ENCODE measurements at regions of chr10 and their contacts with region 1.

Region 1: DNA sequence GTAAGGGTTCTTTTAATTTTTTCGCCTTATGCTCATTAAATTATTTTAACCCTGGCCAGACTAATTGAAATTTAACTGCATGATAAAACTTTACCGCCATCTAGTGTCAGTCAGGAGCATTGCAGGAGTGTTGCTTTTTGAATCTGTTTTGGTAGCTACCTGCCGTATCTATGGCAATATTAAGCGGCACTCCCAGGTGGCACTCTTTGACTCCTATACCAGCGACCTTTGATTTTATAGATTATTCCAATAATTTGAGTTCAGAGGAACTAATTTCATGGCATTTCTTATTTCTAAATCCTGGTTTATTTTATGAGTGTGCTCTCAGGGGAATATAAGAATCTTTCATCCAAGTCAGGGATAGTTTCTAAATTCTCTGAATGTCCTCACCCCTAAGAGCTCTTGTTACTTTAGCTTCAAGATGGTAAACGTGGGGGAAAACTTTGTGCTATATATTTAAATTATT is 198.9 kb downstream of the REEP3 start:
- DNase-seq: peak; percentile 64 to 69 (median 67)
- H3K4me3 ChIP-seq: no peak overlapping the region
- H3K4me3 Mint-ChIP-seq: no peak overlapping the region
- H3K27ac ChIP-seq: no peak overlapping the region
- H3K27ac Mint-ChIP-seq: peak overlapping the region in 4 of 7 donors; percentile 40 to 76 (median 60)
- H3K4me1 ChIP-seq: peaks cover 6% of the 10 kb centered on the region
- H3K4me1 Mint-ChIP-seq: peaks cover 4 to 8% (median 6%) of the 10 kb centered on the region in 4 donors
- H3K27me3 ChIP-seq: no peaks in the 10 kb centered on the region
- H3K27me3 Mint-ChIP-seq: peaks cover 0 to 2% of the 10 kb centered on the region in 2 donors

Region 2: GRCh38 chr10:62594093-62594520 is 1126.0 kb before region 1 on chr10:
- CTCF ChIA-PET with region 1: interaction called, 3 read pairs
- POLR2A ChIA-PET with region 1: no interaction called
- intact Hi-C with region 1: loop called (anchors 5 kb)
- DNase-seq: peak; percentile 38 to 59 (median 44)
- H3K4me3 ChIP-seq: no peak overlapping the region
- H3K4me3 Mint-ChIP-seq: peak overlapping the region in 1 of 8 donors; percentile 10
- H3K27ac ChIP-seq: no peak overlapping the region
- H3K27ac Mint-ChIP-seq: peak overlapping the region in 1 of 7 donors; percentile 9
- H3K4me1 ChIP-seq: no peaks in the 10 kb centered on the region
- H3K4me1 Mint-ChIP-seq: peaks cover 0 to 4% (median under 1%) of the 10 kb centered on the region in 4 donors
- H3K27me3 ChIP-seq: no peaks in the 10 kb centered on the region
- H3K27me3 Mint-ChIP-seq: peaks cover 3 to 5% of the 10 kb centered on the region in 2 donors

Region 3: GRCh38 chr10:63157845-63158624 is 562.1 kb before region 1 on chr10:
- CTCF ChIA-PET with region 1: interaction called, 407 read pairs
- POLR2A ChIA-PET with region 1: interaction called, 4 read pairs
- intact Hi-C with region 1: no loop called
- DNase-seq: peak; percentile 62 to 66 (median 64)
- H3K4me3 ChIP-seq: no peak overlapping the region
- H3K4me3 Mint-ChIP-seq: no peak overlapping the region
- H3K27ac ChIP-seq: no peak overlapping the region
- H3K27ac Mint-ChIP-seq: peak overlapping the region in 2 of 7 donors; percentile 47
- H3K4me1 ChIP-seq: no peaks in the 10 kb centered on the region
- H3K4me1 Mint-ChIP-seq: peaks cover 7 to 12% (median 9%) of the 10 kb centered on the region in 4 donors
- H3K27me3 ChIP-seq: no peaks in the 10 kb centered on the region
- H3K27me3 Mint-ChIP-seq: no peaks in the 10 kb centered on the region

Region 4: DNA sequence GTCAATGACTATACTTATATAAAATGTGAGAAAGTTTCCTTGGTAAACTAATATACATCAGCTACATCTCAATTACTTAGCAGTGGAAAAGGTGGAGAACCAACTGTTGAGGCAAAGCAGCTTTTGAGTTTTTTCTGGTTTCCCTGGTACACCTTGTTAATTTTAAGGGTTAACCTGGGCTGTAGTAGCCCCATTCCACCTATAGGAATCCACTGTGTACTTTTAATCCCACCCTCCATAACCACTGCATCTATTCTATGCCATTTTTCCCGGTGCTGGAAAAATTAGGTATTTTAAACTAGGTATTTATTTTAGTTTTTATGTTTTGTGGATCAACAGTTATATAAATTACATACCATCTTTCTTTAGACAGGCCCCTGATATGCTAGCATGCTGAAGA is 544.6 kb before region 1 on chr10:
- CTCF ChIA-PET with region 1: interaction called, 407 read pairs
- POLR2A ChIA-PET with region 1: no interaction called
- intact Hi-C with region 1: no loop called
- DNase-seq: no peak
- H3K4me3 ChIP-seq: no peak overlapping the region
- H3K4me3 Mint-ChIP-seq: no peak overlapping the region
- H3K27ac ChIP-seq: no peak overlapping the region
- H3K27ac Mint-ChIP-seq: peak overlapping the region in 1 of 7 donors; percentile 25
- H3K4me1 ChIP-seq: peaks cover 4% of the 10 kb centered on the region
- H3K4me1 Mint-ChIP-seq: peaks cover 15 to 25% (median 21%) of the 10 kb centered on the region in 4 donors
- H3K27me3 ChIP-seq: no peaks in the 10 kb centered on the region
- H3K27me3 Mint-ChIP-seq: no peaks in the 10 kb centered on the region

Region 5: GRCh38 chr10:63206997-63207811 is 512.9 kb before region 1 on chr10:
- CTCF ChIA-PET with region 1: interaction called, 11 read pairs
- POLR2A ChIA-PET with region 1: no interaction called
- intact Hi-C with region 1: no loop called
- DNase-seq: peak in 1 of 5 donors; percentile 6
- H3K4me3 ChIP-seq: no peak overlapping the region
- H3K4me3 Mint-ChIP-seq: peak overlapping the region in 7 of 8 donors; percentile 51 to 70 (median 62)
- H3K27ac ChIP-seq: no peak overlapping the region
- H3K27ac Mint-ChIP-seq: peak overlapping the region; percentile 32 to 91 (median 66)
- H3K4me1 ChIP-seq: peaks cover 43% of the 10 kb centered on the region
- H3K4me1 Mint-ChIP-seq: peaks cover 46 to 65% (median 57%) of the 10 kb centered on the region in 4 donors
- H3K27me3 ChIP-seq: no peaks in the 10 kb centered on the region
- H3K27me3 Mint-ChIP-seq: no peaks in the 10 kb centered on the region

Region 6: GRCh38 chr10:63465293-63466143 is 254.6 kb before region 1 on chr10 and contains the start of gene JMJD1C:
- CTCF ChIA-PET with region 1: no interaction called
- POLR2A ChIA-PET with region 1: no interaction called
- intact Hi-C with region 1: loop called (anchors 5 kb)
- DNase-seq: peak; percentile 63 to 70 (median 67)
- H3K4me3 ChIP-seq: peak within 1 kb of the TSS; percentile 58 to 71
- H3K4me3 Mint-ChIP-seq: peak within 1 kb of the TSS; percentile 94 to 98 (median 96)
- H3K27ac ChIP-seq: peak within 1 kb of the TSS; percentile 58
- H3K27ac Mint-ChIP-seq: peak within 1 kb of the TSS; percentile 85 to 94 (median 93)
- H3K4me1 ChIP-seq: peaks cover 16% of the 10 kb centered on the region
- H3K4me1 Mint-ChIP-seq: peaks cover 17 to 31% (median 19%) of the 10 kb centered on the region in 4 donors
- H3K27me3 ChIP-seq: no peaks in the 10 kb centered on the region
- H3K27me3 Mint-ChIP-seq: no peaks in the 10 kb centered on the region
- total RNA-seq, gene JMJD1C: 113 to 115 TPM

Region 7: GRCh38 chr10:63707254-63707910 is 12.7 kb before region 1 on chr10:
- CTCF ChIA-PET with region 1: interaction called, 16 read pairs
- POLR2A ChIA-PET with region 1: no interaction called
- intact Hi-C with region 1: no loop called
- DNase-seq: no peak
- H3K4me3 ChIP-seq: no peak overlapping the region
- H3K4me3 Mint-ChIP-seq: no peak overlapping the region
- H3K27ac ChIP-seq: no peak overlapping the region
- H3K27ac Mint-ChIP-seq: no peak overlapping the region
- H3K4me1 ChIP-seq: no peaks in the 10 kb centered on the region
- H3K4me1 Mint-ChIP-seq: peaks cover 0 to 5% (median 2%) of the 10 kb centered on the region in 4 donors
- H3K27me3 ChIP-seq: no peaks in the 10 kb centered on the region
- H3K27me3 Mint-ChIP-seq: no peaks in the 10 kb centered on the region

Region 8: DNA sequence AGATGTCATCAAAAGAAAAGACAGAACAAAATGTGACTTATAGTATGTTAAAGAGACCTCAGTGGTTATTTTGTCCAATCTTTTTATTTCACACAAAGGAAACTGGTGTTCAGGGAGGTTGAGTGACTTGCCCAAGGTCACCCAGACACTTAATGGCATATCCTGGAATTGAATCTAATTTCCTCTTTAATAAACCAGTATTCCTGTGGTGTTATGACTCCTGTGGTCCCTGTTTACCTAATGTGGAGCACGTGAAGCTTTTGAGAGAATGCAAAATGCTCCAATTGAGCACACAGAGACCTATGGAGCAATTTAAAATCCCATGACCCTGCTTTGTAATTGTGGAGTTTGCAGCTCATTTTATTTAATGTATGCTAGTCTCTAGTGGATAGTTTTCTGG is 53.0 kb after region 1 on chr10:
- CTCF ChIA-PET with region 1: no interaction called
- POLR2A ChIA-PET with region 1: no interaction called
- intact Hi-C with region 1: no loop called
- DNase-seq: no peak
- H3K4me3 ChIP-seq: no peak overlapping the region
- H3K4me3 Mint-ChIP-seq: no peak overlapping the region
- H3K27ac ChIP-seq: no peak overlapping the region
- H3K27ac Mint-ChIP-seq: no peak overlapping the region
- H3K4me1 ChIP-seq: no peaks in the 10 kb centered on the region
- H3K4me1 Mint-ChIP-seq: no peaks in the 10 kb centered on the region
- H3K27me3 ChIP-seq: no peaks in the 10 kb centered on the region
- H3K27me3 Mint-ChIP-seq: peaks cover 0 to 11% of the 10 kb centered on the region in 2 donors

Measured in CD4-positive, alpha-beta memory T cell (primary cell).